Caco-2 (cell line): ENCODE measurements at regions of chr2 and their contacts with region 1.

Region 1: GRCh38 chr2:111897924-111898702 is at the start of gene MERTK:
- DNase-seq: peak; percentile 96
- H3K4me3 ChIP-seq: peak within 1 kb of the TSS; percentile 90
- H3K4me3 Mint-ChIP-seq: peak within 1 kb of the TSS; percentile 86
- H3K27ac Mint-ChIP-seq: peak within 1 kb of the TSS; percentile 72
- H3K4me1 ChIP-seq: peaks cover 23% of the 10 kb centered on the region
- H3K4me1 Mint-ChIP-seq: peaks cover 35% of the 10 kb centered on the region
- H3K27me3 ChIP-seq: no peaks in the 10 kb centered on the region
- H3K27me3 Mint-ChIP-seq: no peaks in the 10 kb centered on the region
- CTCF ChIP-seq: peak; percentile 62 to 73
- total RNA-seq, gene MERTK: 39.2 and 42.6 TPM in 2 replicates

Region 2: DNA sequence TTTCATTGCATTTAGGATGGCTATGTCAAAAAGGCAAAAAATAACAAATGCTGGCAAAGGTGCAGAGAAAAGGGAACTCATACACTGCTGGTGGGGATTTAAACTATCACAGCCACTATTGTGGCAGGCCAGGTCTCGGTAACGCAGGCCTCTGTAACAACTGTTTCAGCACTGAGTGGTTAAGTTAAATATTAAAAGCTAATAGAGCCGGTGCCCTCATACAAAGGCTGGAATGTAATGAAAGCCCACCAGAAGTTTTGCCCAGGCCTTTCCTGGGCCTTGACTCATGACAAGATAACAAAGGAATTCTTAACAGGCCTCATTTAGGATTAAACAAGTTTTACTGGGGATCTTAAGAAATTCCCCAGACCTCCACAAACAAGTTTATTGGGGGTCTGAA is 11.0 kb after region 1 on chr2:
- CTCF ChIA-PET with region 1: interaction called, 6 read pairs
- POLR2A ChIA-PET with region 1: interaction called, 15 read pairs
- intact Hi-C with region 1: no loop called
- DNase-seq: no peak
- H3K4me3 ChIP-seq: no peak overlapping the region
- H3K4me3 Mint-ChIP-seq: peak overlapping the region; percentile 15
- H3K27ac Mint-ChIP-seq: peak overlapping the region; percentile 88
- H3K4me1 ChIP-seq: peaks cover 72% of the 10 kb centered on the region
- H3K4me1 Mint-ChIP-seq: peaks cover 48% of the 10 kb centered on the region
- H3K27me3 ChIP-seq: no peaks in the 10 kb centered on the region
- H3K27me3 Mint-ChIP-seq: no peaks in the 10 kb centered on the region
- CTCF ChIP-seq: no peak

Region 3: GRCh38 chr2:111946294-111947114 is 48.4 kb after region 1 on chr2:
- CTCF ChIA-PET with region 1: interaction called, 3 read pairs
- POLR2A ChIA-PET with region 1: no interaction called
- intact Hi-C with region 1: loop called (anchors 1 kb)
- DNase-seq: peak; percentile 87
- H3K4me3 ChIP-seq: no peak overlapping the region
- H3K4me3 Mint-ChIP-seq: peak overlapping the region; percentile 66
- H3K27ac Mint-ChIP-seq: peak overlapping the region; percentile 73
- H3K4me1 ChIP-seq: peaks cover 38% of the 10 kb centered on the region
- H3K4me1 Mint-ChIP-seq: peaks cover 58% of the 10 kb centered on the region
- H3K27me3 ChIP-seq: no peaks in the 10 kb centered on the region
- H3K27me3 Mint-ChIP-seq: no peaks in the 10 kb centered on the region
- CTCF ChIP-seq: no peak

Region 4: DNA sequence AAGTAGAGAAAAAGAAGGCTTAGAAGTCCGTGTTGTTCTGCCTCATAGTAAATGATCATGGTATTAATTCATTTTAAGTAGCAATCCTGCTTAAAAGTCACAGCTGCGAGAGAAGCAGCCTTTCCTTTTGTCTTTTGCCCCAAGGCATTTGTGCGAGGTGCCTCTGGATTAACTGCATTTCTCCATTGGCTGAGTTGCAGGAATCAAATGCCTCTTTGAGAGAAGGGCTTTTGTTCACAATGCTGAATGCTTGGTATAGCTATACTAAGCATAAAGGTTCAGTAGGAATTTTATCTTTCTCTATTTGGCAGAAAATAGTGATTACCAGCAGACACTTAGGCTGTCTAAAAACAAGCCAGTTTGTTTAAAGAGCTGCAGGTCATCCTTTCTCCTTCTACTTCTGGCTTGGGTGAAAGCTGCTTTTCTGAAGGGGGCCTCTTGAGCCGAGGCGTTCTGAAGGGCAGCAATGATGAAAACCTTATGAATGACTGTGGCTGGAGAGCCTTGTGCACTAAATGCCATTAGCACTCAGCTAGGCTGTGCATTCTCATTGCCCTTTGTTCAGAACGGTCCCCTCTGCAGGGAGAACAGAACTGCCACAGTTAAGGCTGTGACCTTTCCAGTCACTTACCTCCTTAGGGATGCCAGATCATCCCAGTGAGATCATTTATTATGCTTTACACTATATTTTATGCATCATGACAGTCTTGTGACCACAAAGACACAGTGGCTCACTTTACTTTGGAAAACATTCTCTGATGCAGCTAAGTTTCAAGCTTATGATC is 88.2 kb after region 1 on chr2:
- CTCF ChIA-PET with region 1: interaction called, 11 read pairs
- POLR2A ChIA-PET with region 1: no interaction called
- intact Hi-C with region 1: loop called (anchors 5 kb)
- DNase-seq: peak in 1 of 2 experiments; percentile 18
- H3K4me3 ChIP-seq: no peak overlapping the region
- H3K4me3 Mint-ChIP-seq: peak overlapping the region; percentile 19
- H3K27ac Mint-ChIP-seq: peak overlapping the region; percentile 55
- H3K4me1 ChIP-seq: peaks cover 61% of the 10 kb centered on the region
- H3K4me1 Mint-ChIP-seq: peaks cover 62% of the 10 kb centered on the region
- H3K27me3 ChIP-seq: no peaks in the 10 kb centered on the region
- H3K27me3 Mint-ChIP-seq: no peaks in the 10 kb centered on the region
- CTCF ChIP-seq: no peak

Region 5: GRCh38 chr2:112054847-112055729 is 157.0 kb after region 1 on chr2 and contains the start of gene TMEM87B:
- CTCF ChIA-PET with region 1: interaction called, 8 read pairs
- POLR2A ChIA-PET with region 1: interaction called, 17 read pairs
- intact Hi-C with region 1: no loop called
- DNase-seq: peak; percentile 99
- H3K4me3 ChIP-seq: peak within 1 kb of the TSS; percentile 87
- H3K4me3 Mint-ChIP-seq: peak within 1 kb of the TSS; percentile 85
- H3K27ac Mint-ChIP-seq: peak within 1 kb of the TSS; percentile 72
- H3K4me1 ChIP-seq: peaks cover 15% of the 10 kb centered on the region
- H3K4me1 Mint-ChIP-seq: peaks cover 14% of the 10 kb centered on the region
- H3K27me3 ChIP-seq: no peaks in the 10 kb centered on the region
- H3K27me3 Mint-ChIP-seq: no peaks in the 10 kb centered on the region
- CTCF ChIP-seq: no peak
- total RNA-seq, gene TMEM87B: 16.3 and 17.1 TPM in 2 replicates

Region 6: GRCh38 chr2:112304298-112304941 is 406.3 kb after region 1 on chr2:
- CTCF ChIA-PET with region 1: no interaction called
- POLR2A ChIA-PET with region 1: no interaction called
- intact Hi-C with region 1: no loop called
- DNase-seq: no peak
- H3K4me3 ChIP-seq: no peak overlapping the region
- H3K4me3 Mint-ChIP-seq: no peak overlapping the region
- H3K27ac Mint-ChIP-seq: no peak overlapping the region
- H3K4me1 ChIP-seq: peaks cover 28% of the 10 kb centered on the region
- H3K4me1 Mint-ChIP-seq: peaks cover 35% of the 10 kb centered on the region
- H3K27me3 ChIP-seq: no peaks in the 10 kb centered on the region
- H3K27me3 Mint-ChIP-seq: no peaks in the 10 kb centered on the region
- CTCF ChIP-seq: no peak

Region 7: DNA sequence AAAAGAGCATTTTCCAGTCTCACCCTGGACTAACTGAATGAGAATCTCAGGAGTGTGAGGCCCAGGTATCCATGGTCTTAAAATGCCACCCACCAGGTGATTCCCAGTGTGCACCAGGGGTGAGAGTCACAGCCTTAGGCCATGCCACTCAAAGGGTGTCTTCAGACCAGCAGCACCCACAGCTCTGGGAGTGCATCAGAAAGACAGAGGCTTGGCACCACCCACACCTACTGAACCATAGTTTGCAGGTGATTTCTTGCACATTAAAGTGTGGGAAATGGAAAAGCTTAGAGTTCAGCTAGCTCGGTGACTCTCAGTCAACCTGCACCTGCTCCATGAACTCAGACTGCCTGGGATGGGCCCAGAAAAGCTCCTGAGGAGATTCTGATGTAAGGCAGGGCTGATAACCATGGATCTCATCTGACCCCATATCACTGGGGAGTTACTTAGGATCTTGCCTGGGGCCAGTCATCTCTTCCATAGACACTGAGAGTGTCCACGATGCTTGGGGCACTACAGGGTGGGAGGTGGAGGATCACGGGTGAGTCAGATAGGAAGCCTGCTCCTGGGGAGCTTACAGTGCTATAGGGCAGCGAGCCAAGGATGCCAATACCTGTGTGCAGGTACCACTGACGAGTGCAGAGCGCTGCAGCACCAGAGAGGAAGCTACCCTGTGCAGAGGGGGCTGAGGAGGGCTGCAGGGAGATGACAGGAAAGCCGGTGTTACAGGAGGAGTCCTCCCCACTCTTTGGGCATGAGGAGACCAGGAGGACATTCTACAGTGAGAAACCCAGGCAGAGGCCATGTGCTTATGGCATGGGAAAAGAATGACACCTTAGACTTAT is 1017.4 kb after region 1 on chr2:
- CTCF ChIA-PET with region 1: no interaction called
- POLR2A ChIA-PET with region 1: no interaction called
- intact Hi-C with region 1: no loop called
- DNase-seq: no peak
- H3K4me3 ChIP-seq: no peak overlapping the region
- H3K4me3 Mint-ChIP-seq: no peak overlapping the region
- H3K27ac Mint-ChIP-seq: no peak overlapping the region
- H3K4me1 ChIP-seq: no peaks in the 10 kb centered on the region
- H3K4me1 Mint-ChIP-seq: peaks cover 5% of the 10 kb centered on the region
- H3K27me3 ChIP-seq: no peaks in the 10 kb centered on the region
- H3K27me3 Mint-ChIP-seq: no peaks in the 10 kb centered on the region
- CTCF ChIP-seq: no peak